ENCODE measurements at regions of chr2 and their contacts with region 1.

Region 1: DNA sequence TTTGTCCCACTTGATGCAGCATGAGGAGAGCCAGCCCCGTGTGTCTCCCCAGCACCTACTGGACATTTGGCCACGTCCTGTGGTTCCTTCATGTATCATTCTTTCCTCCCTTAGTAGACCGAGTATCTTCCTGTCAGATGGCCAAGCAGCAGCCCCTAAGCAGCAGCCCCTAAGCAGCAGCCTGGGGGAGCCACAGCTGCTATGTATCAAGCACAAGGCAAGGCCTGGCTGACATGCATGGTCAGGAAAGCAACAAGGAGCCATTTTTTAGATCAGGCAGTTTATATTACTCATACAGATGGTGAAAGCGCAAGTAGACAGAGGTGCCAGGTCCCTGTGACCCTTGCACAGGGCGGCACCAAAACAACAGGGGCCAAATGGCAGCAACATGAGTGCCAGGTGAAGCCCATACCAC is 22.1 kb downstream of the CHCHD5 start:
- DNase-seq: no peak
- H3K4me3 ChIP-seq: no peak overlapping the region
- H3K27ac ChIP-seq: no peak overlapping the region
- H3K4me1 ChIP-seq: peaks cover 5% of the 10 kb centered on the region
- H3K27me3 ChIP-seq: no peaks in the 10 kb centered on the region
- CTCF ChIP-seq: no peak

Region 2: GRCh38 chr2:112449854-112450253 is 156.6 kb before region 1 on chr2:
- CTCF ChIA-PET with region 1: no interaction called
- dilution Hi-C with region 1: no loop called
- in situ Hi-C with region 1: no loop called
- intact Hi-C with region 1: no loop called
- DNase-seq: no peak
- H3K4me3 ChIP-seq: no peak overlapping the region
- H3K27ac ChIP-seq: no peak overlapping the region
- H3K4me1 ChIP-seq: no peaks in the 10 kb centered on the region
- H3K27me3 ChIP-seq: peaks cover 2% of the 10 kb centered on the region
- CTCF ChIP-seq: no peak

Region 3: DNA sequence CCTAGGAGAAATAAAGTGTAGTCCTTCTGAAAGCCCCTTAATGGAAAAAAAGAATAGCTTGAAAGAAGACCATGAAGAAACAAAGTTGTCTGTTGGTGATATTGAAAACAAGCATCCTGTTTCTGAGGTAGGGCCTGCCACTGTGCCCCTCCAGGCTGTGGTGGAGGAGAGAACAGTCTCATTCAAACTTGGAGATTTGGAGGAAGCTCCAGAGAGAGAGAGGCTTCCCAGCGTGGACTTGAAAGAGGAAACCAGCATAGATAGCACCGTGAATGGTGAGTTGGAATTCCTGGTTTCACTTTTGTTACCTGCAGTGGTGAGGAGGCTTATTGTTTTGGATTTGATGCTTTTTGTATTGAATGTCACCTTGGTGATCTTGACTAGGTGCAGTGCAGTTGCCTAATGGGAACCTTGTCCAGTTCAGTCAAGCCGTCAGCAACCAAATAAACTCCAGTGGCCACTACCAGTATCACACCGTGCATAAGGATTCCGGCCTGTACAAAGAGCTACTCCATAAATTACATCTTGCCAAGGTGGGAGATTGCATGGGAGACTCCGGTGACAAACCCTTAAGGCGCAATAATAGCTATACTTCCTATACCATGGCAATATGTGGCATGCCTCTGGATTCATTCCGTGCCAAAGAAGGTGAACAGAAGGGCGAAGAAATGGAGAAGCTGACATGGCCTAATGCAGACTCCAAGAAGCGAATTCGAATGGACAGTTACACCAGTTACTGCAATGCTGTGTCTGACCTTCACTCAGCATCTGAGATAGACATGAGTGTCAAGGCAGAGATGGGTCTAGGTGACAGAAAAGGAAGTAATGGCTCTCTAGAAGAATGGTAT is 52.5 kb after region 1 on chr2:
- CTCF ChIA-PET with region 1: no interaction called
- dilution Hi-C with region 1: no loop called
- in situ Hi-C with region 1: no loop called
- intact Hi-C with region 1: loop called (anchors 2 kb)
- DNase-seq: peak; percentile 48
- H3K4me3 ChIP-seq: no peak overlapping the region
- H3K27ac ChIP-seq: peak overlapping the region; percentile 61
- H3K4me1 ChIP-seq: peaks cover 26% of the 10 kb centered on the region
- H3K27me3 ChIP-seq: no peaks in the 10 kb centered on the region
- CTCF ChIP-seq: peak in 1 of 2 donors; percentile 25

Measured in mammary epithelial cell (primary cell).